ENCODE measurements at regions of chr3 and their contacts with region 1.

Region 1: DNA sequence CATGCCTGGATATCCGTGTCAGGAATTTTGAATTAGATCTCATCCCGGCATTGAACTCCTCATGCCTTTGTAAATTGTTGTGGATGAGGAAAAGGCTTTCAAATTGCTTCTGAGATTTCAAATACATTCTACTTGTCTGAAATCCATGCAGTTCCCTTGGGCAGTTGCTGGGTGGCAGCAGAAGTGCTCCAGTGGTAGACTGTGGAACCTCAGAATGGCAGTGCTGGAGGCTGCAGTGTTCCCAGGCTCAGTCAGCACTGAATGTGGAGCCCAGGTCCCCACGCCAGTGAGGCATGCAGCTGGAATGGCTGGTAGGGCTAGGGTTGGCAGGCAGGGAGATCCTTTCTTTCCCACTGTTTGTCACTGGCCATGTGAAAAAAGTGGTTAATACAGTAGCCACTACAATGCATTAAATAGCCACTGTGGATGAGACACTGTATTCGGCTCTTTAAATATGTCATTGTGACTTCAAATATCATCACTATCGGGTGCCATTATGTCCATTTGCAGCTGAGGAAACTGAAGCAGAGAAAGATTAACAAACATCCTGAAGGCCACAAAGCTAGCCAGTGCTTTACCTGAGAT is 98.6 kb downstream of the TPRG1 start:
- DNase-seq: peak; percentile 84
- H3K4me3 ChIP-seq: no peak overlapping the region
- H3K27ac ChIP-seq: peak overlapping the region; percentile 90
- H3K4me1 ChIP-seq: peaks cover 51% of the 10 kb centered on the region
- H3K27me3 ChIP-seq: no peaks in the 10 kb centered on the region
- CTCF ChIP-seq: peak; percentile 97

Region 2: GRCh38 chr3:189148081-189148507 is 122.2 kb before region 1 on chr3:
- CTCF ChIA-PET with region 1: no interaction called
- dilution Hi-C with region 1: no loop called
- in situ Hi-C with region 1: no loop called
- intact Hi-C with region 1: no loop called
- DNase-seq: peak; percentile 37
- H3K4me3 ChIP-seq: no peak overlapping the region
- H3K27ac ChIP-seq: no peak overlapping the region
- H3K4me1 ChIP-seq: no peaks in the 10 kb centered on the region
- H3K27me3 ChIP-seq: no peaks in the 10 kb centered on the region
- CTCF ChIP-seq: peak; percentile 76 to 86

Region 3: DNA sequence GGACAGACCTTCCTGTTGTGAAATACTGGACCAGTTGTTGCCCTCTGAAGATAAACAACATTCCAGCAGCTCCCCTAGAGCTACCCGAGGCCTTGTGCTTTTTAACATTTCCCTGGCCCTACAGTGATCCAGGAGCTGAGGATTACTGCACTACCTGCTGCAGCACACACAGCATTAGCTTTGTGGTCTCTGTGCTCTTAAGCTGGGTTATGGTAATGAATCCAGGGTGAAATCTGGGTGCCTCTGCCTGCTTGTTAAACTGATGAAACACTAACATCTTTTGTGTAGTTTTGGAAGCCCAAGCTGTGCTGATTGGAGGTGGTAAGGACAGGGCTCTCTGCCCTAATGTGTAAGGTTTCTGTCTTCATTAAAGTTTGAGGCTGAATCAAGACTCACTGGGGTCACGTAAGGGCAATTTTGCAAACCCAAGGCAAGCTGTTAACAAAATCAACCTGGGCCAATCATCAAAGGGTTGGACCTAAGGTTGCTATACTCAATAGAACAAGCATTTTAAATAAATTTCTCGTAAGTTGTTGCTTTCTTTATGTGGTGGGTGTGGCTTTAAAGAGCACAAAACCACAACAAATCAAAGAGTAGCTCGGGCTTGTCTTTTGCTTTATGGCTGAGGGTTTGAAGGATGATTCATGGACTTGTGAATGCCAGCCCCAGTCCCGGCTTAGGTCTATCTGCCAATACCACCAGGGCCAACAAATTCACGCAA is 85.3 kb after region 1 on chr3:
- CTCF ChIA-PET with region 1: no interaction called
- dilution Hi-C with region 1: no loop called
- in situ Hi-C with region 1: no loop called
- intact Hi-C with region 1: loop called (anchors 2 kb)
- DNase-seq: peak; percentile 91
- H3K4me3 ChIP-seq: no peak overlapping the region
- H3K27ac ChIP-seq: peak overlapping the region; percentile 88
- H3K4me1 ChIP-seq: peaks cover 36% of the 10 kb centered on the region
- H3K27me3 ChIP-seq: no peaks in the 10 kb centered on the region
- CTCF ChIP-seq: no peak

Region 4: GRCh38 chr3:189512039-189512438 is 241.7 kb after region 1 on chr3:
- CTCF ChIA-PET with region 1: interaction called, 3 read pairs
- dilution Hi-C with region 1: no loop called
- in situ Hi-C with region 1: no loop called
- intact Hi-C with region 1: loop called (anchors 5 kb)
- DNase-seq: no peak
- H3K4me3 ChIP-seq: no peak overlapping the region
- H3K27ac ChIP-seq: peak overlapping the region; percentile 96
- H3K4me1 ChIP-seq: peaks cover 24% of the 10 kb centered on the region
- H3K27me3 ChIP-seq: no peaks in the 10 kb centered on the region
- CTCF ChIP-seq: no peak

Region 5: GRCh38 chr3:189652042-189652441 is 381.7 kb after region 1 on chr3:
- CTCF ChIA-PET with region 1: no interaction called
- dilution Hi-C with region 1: no loop called
- in situ Hi-C with region 1: no loop called
- intact Hi-C with region 1: loop called (anchors 5 kb)
- DNase-seq: peak; percentile 23
- H3K4me3 ChIP-seq: no peak overlapping the region
- H3K27ac ChIP-seq: no peak overlapping the region
- H3K4me1 ChIP-seq: no peaks in the 10 kb centered on the region
- H3K27me3 ChIP-seq: no peaks in the 10 kb centered on the region
- CTCF ChIP-seq: no peak

Region 6: GRCh38 chr3:189786479-189787064 is 516.2 kb after region 1 on chr3:
- CTCF ChIA-PET with region 1: interaction called, 3 read pairs
- dilution Hi-C with region 1: no loop called
- in situ Hi-C with region 1: loop called (anchors 5 to 10 kb)
- intact Hi-C with region 1: no loop called
- DNase-seq: no peak
- H3K4me3 ChIP-seq: no peak overlapping the region
- H3K27ac ChIP-seq: no peak overlapping the region
- H3K4me1 ChIP-seq: peaks cover 12% of the 10 kb centered on the region
- H3K27me3 ChIP-seq: no peaks in the 10 kb centered on the region
- CTCF ChIP-seq: peak in 1 of 2 donors; percentile 32

Region 7: GRCh38 chr3:189862390-189863023 is 592.2 kb after region 1 on chr3:
- CTCF ChIA-PET with region 1: interaction called, 3 read pairs
- dilution Hi-C with region 1: no loop called
- in situ Hi-C with region 1: no loop called
- intact Hi-C with region 1: loop called (anchors 5 kb)
- DNase-seq: peak; percentile 76
- H3K4me3 ChIP-seq: peak overlapping the region in 1 of 3 experiments; percentile 2
- H3K27ac ChIP-seq: peak overlapping the region; percentile 86
- H3K4me1 ChIP-seq: peaks cover 34% of the 10 kb centered on the region
- H3K27me3 ChIP-seq: no peaks in the 10 kb centered on the region
- CTCF ChIP-seq: no peak